ENCODE measurements at regions of chr12 and their contacts with region 1.

Region 1: GRCh38 chr12:58529897-58530741 is 390.2 kb downstream of the LRIG3 start:
- DNase-seq: no peak
- ATAC-seq: peak; percentile 54
- H3K4me3 ChIP-seq: no peak overlapping the region
- H3K27ac ChIP-seq: no peak overlapping the region
- H3K4me1 ChIP-seq: peaks cover 0 to 2% of the 10 kb centered on the region in 2 donors
- H3K27me3 ChIP-seq: no peaks in the 10 kb centered on the region

Region 2: GRCh38 chr12:58425481-58426392 is 104.4 kb before region 1 on chr12:
- intact Hi-C with region 1: loop called in 1 of 2 experiments (anchors 5 kb)
- DNase-seq: peak in 1 of 2 donors; percentile 63
- ATAC-seq: peak; percentile 86
- H3K4me3 ChIP-seq: no peak overlapping the region
- H3K27ac ChIP-seq: peak overlapping the region; percentile 22 to 96
- H3K4me1 ChIP-seq: peaks cover 2 to 4% of the 10 kb centered on the region in 2 donors
- H3K27me3 ChIP-seq: no peaks in the 10 kb centered on the region

Measured in aorta (tissue), 5 donors.